CD8-positive, alpha-beta T cell (primary cell): ENCODE measurements at regions of chr21 and their contacts with region 1.

Region 1: DNA sequence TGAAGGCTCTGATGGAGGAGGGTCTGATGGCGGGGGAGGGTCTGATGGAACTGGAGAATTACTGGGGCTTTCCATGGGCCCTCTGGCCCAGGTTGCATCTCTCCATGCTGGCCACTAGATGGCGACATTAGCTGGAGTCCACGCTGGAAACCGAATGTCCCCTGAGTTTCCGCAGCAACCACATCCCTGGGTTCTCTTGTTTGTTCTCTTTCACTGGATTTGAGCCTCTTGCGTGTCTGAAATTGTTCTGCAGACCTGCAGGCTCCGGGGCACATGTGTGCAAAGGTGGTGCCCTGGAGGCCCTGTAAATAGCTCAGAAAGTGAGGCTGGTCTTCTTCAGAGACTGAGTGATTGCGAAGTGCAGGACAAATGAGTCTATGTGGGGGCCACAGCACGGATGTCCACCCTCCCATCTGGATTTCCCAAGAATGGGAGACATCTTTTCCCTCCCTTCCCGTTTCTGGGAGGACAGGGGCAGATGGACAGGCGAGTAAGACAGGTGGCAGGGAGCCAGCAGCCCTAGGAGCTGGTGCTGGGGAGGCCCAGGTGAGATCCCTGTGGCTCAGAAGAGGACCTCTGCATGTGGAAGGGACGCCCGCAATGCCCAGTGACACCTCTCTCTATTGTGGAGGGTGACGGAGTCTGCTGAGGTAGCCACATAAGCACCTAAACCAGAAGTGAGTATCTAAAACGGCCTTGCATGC is 73.2 kb upstream of the ABCG1 start:
- DNase-seq: peak; percentile 38 to 84 (median 68)
- ATAC-seq: peak; percentile 90
- H3K4me3 ChIP-seq: no peak overlapping the region
- H3K4me3 Mint-ChIP-seq: no peak overlapping the region
- H3K27ac ChIP-seq: no peak overlapping the region
- H3K27ac Mint-ChIP-seq: peak overlapping the region; percentile 32
- H3K4me1 ChIP-seq: peaks cover 8% of the 10 kb centered on the region
- H3K4me1 Mint-ChIP-seq: peaks cover 9% of the 10 kb centered on the region
- H3K27me3 ChIP-seq: no peaks in the 10 kb centered on the region
- H3K27me3 Mint-ChIP-seq: no peaks in the 10 kb centered on the region
- CTCF ChIP-seq: peak; percentile 80

Region 2: DNA sequence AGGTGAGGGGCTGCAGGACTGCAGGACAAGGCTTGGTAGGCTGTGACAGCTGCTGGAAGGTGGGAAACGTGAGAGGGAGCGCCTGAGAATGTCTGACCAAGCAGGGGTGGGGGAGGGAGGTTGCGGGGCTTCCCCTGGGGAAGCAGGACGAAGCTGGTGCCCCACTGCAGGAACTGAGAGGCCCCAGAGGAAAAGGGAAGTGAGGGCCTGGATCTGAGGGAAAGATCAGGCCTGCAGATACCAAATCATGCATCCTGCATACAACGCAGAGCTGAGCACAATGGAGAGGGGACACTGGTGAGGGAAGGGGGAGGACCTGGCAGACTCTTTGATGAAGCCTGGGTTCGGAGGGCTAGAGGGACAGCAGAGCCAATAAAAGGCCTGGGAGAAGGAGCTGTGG is 1043.4 kb before region 1 on chr21:
- CTCF ChIA-PET with region 1: no interaction called
- POLR2A ChIA-PET with region 1: no interaction called
- intact Hi-C with region 1: no loop called
- DNase-seq: no peak
- ATAC-seq: no peak
- H3K4me3 ChIP-seq: no peak overlapping the region
- H3K4me3 Mint-ChIP-seq: no peak overlapping the region
- H3K27ac ChIP-seq: no peak overlapping the region
- H3K27ac Mint-ChIP-seq: no peak overlapping the region
- H3K4me1 ChIP-seq: no peaks in the 10 kb centered on the region
- H3K4me1 Mint-ChIP-seq: no peaks in the 10 kb centered on the region
- H3K27me3 ChIP-seq: no peaks in the 10 kb centered on the region
- H3K27me3 Mint-ChIP-seq: peaks cover 22% of the 10 kb centered on the region
- CTCF ChIP-seq: no peak

Region 3: GRCh38 chr21:42107881-42108553 is 37.7 kb before region 1 on chr21:
- CTCF ChIA-PET with region 1: no interaction called
- POLR2A ChIA-PET with region 1: no interaction called
- intact Hi-C with region 1: no loop called
- DNase-seq: peak; percentile 45 to 87 (median 68)
- ATAC-seq: peak; percentile 99
- H3K4me3 ChIP-seq: peak overlapping the region in 1 of 2 experiments; percentile 28
- H3K4me3 Mint-ChIP-seq: peak overlapping the region; percentile 69
- H3K27ac ChIP-seq: no peak overlapping the region
- H3K27ac Mint-ChIP-seq: peak overlapping the region; percentile 62
- H3K4me1 ChIP-seq: peaks cover 20% of the 10 kb centered on the region
- H3K4me1 Mint-ChIP-seq: peaks cover 9% of the 10 kb centered on the region
- H3K27me3 ChIP-seq: no peaks in the 10 kb centered on the region
- H3K27me3 Mint-ChIP-seq: peaks cover 4% of the 10 kb centered on the region
- CTCF ChIP-seq: peak; percentile 74

Region 4: GRCh38 chr21:42199488-42200458 is 54.1 kb after region 1 on chr21:
- CTCF ChIA-PET with region 1: interaction called, 3 read pairs
- POLR2A ChIA-PET with region 1: interaction called, 3 read pairs
- intact Hi-C with region 1: loop called in 1 of 2 experiments (anchors 5 kb)
- DNase-seq: peak in 4 of 9 experiments; percentile 34 to 76 (median 48)
- ATAC-seq: peak; percentile 77
- H3K4me3 ChIP-seq: no peak overlapping the region
- H3K4me3 Mint-ChIP-seq: peak overlapping the region; percentile 5
- H3K27ac ChIP-seq: peak overlapping the region; percentile 15 to 40
- H3K27ac Mint-ChIP-seq: peak overlapping the region; percentile 89
- H3K4me1 ChIP-seq: peaks cover 39% of the 10 kb centered on the region
- H3K4me1 Mint-ChIP-seq: peaks cover 68% of the 10 kb centered on the region
- H3K27me3 ChIP-seq: no peaks in the 10 kb centered on the region
- H3K27me3 Mint-ChIP-seq: no peaks in the 10 kb centered on the region
- CTCF ChIP-seq: no peak

Region 5: DNA sequence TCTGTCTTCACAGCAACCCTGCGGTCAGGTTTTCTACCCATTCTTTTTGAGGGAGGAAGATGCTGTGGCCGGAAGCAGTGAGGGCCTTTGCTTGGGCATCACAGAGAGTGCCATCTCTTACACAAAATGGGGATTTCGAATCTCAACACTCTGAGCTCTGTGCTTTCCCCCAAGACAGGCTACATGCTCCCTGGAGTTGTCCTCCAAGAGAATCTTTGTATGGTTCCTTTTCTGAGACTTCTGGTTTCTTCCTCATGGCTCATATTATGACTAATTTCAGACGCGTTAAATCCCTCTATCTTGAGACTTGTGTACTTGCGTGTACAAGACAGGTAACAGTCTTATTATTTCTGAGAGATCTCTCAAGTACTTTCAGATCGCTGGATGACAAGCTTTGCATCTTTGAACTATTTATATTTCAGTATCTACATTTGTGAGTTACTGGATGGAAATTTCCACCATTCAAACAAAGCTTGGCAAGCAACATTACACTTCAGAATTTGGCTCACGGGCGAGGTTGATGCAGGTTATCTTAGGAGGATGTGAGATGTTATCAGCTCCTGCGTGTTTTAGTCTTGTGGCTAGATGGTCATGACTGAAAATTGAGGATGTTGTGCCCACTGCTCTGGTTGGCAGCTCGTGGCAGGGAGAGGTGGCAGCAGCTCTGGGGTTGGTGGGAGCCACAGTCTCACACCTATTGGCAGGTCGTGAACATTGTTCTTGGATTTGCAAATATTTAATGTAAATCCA is 92.6 kb after region 1 on chr21:
- CTCF ChIA-PET with region 1: interaction called, 33 read pairs
- POLR2A ChIA-PET with region 1: interaction called, 9 read pairs
- intact Hi-C with region 1: loop called in 1 of 2 experiments (anchors 5 kb)
- DNase-seq: peak in 7 of 9 experiments; percentile 16 to 88 (median 61)
- ATAC-seq: peak; percentile 29
- H3K4me3 ChIP-seq: no peak overlapping the region
- H3K4me3 Mint-ChIP-seq: peak overlapping the region; percentile 63
- H3K27ac ChIP-seq: peak overlapping the region; percentile 45 to 83
- H3K27ac Mint-ChIP-seq: peak overlapping the region; percentile 93
- H3K4me1 ChIP-seq: peaks cover 62% of the 10 kb centered on the region
- H3K4me1 Mint-ChIP-seq: peaks cover 73% of the 10 kb centered on the region
- H3K27me3 ChIP-seq: no peaks in the 10 kb centered on the region
- H3K27me3 Mint-ChIP-seq: no peaks in the 10 kb centered on the region
- CTCF ChIP-seq: no peak

Region 6: DNA sequence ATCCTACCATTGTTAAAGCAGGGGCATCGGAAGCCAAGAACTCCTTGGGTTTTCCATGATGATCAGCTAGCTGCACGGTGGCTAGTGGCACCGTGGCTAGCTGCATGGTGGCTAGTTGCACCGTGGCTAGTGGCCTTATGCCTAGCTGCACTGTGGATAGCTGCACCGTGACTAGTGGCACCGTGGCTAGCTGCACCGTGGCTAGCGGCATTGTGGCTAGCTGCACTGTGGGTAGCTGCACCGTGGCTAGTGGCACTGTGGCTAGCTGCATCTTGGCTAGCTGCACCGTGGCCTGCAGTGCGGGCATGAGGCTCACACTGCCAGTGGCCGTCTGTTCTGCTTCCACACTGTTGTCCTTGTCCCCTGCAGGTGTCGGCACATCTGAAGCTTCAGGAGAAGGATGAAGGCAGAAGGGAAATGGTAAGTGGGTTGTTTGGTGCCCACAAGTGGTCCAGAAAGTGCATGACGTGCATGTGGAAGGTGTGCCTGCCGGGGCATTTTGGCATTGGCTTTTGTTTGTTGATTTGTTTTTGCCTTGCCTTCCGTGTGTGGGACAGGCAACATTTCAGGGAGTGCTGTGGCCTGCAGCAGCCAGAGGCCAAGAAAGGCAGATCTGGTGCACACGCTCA is 130.9 kb after region 1 on chr21:
- CTCF ChIA-PET with region 1: interaction called, 26 read pairs
- POLR2A ChIA-PET with region 1: no interaction called
- intact Hi-C with region 1: loop called in 1 of 2 experiments (anchors 1 kb)
- DNase-seq: no peak
- ATAC-seq: no peak
- H3K4me3 ChIP-seq: no peak overlapping the region
- H3K4me3 Mint-ChIP-seq: no peak overlapping the region
- H3K27ac ChIP-seq: no peak overlapping the region
- H3K27ac Mint-ChIP-seq: no peak overlapping the region
- H3K4me1 ChIP-seq: no peaks in the 10 kb centered on the region
- H3K4me1 Mint-ChIP-seq: no peaks in the 10 kb centered on the region
- H3K27me3 ChIP-seq: no peaks in the 10 kb centered on the region
- H3K27me3 Mint-ChIP-seq: no peaks in the 10 kb centered on the region
- CTCF ChIP-seq: no peak

Region 7: DNA sequence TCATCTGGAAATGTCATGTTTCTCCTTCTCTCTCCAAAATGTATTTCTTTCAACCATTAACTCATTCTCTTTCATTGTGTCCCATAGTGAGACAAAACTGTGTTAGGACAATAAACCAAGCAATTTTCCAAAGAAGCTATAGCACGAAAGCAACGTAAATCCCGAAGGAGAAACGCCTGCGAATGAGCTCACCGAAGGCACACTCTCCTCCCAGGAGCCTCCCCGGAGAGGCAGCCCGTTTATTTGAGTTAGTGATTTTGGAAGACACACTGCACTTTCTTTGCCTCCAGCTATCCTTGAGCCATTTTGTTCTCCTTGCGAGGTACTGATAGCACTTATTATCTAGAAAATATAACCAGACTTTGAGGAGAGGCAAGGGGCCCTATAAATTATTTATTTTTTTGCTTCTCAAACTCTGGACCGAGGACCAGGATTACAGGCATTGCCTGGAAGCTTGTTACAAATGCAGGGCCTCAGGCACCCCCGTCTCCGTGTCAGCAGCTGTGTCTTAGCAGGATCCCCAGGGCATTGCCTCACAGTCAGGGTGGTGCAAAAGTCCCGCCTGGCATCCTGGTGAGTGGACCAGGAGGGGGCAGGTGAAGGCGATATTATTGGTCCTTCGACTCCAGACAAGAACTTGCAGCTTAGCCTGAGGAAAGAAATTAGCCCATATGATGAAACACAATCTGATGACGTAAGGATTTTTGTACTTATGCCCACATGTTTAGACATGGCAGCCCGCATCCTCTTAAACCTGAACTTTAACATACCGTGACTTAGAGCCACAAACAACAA is 309.3 kb after region 1 on chr21:
- CTCF ChIA-PET with region 1: interaction called, 10 read pairs
- POLR2A ChIA-PET with region 1: no interaction called
- intact Hi-C with region 1: loop called in 1 of 2 experiments (anchors 5 kb)
- DNase-seq: no peak
- ATAC-seq: no peak
- H3K4me3 ChIP-seq: no peak overlapping the region
- H3K4me3 Mint-ChIP-seq: no peak overlapping the region
- H3K27ac ChIP-seq: no peak overlapping the region
- H3K27ac Mint-ChIP-seq: no peak overlapping the region
- H3K4me1 ChIP-seq: peaks cover 20% of the 10 kb centered on the region
- H3K4me1 Mint-ChIP-seq: peaks cover 35% of the 10 kb centered on the region
- H3K27me3 ChIP-seq: no peaks in the 10 kb centered on the region
- H3K27me3 Mint-ChIP-seq: no peaks in the 10 kb centered on the region
- CTCF ChIP-seq: no peak